Heart right ventricle (tissue), 16 donors: ENCODE measurements at regions of chr12 and their contacts with region 1.

Region 1: DNA sequence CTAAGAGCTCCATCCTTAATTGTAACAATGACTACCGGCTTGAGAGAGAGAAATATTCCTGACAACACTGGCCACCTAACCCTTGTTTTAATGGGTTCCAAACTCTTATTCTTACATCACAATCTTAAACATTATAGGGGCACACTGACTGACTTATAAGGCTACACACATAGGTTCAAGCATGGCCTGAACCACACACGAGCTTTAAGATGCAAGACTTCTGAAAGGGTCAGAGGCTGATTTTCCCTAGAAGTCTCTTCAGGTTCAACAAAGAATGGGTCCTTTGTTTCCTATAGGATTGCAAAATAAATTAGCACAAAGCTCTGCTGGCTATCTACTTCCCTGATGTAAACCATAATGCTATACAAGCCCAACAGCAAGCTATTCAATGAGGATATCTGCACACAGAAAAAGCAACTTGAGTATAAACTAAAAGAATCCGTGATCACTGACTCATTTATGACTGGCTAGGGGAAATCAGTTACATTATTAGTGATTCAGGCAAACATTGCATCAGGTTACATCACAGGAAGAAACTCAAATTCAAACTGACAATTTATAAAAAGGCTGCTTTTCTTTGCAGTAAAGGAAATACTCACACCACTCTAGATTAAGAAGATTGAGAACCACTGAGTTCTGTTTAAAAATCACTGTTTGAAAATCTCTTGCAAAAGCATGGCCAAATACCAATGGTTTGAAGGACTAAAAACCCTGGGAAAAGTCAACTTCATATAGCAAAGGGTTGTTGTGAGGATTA is 8.5 kb downstream of the BTG1 start:
- DNase-seq: no peak
- ATAC-seq: no peak
- H3K4me3 ChIP-seq: peak overlapping the region in 5 of 10 donors; percentile 83 to 95 (median 86)
- H3K27ac ChIP-seq: peak overlapping the region in 7 of 10 donors; percentile 2 to 99 (median 40)
- H3K4me1 ChIP-seq: peaks cover 8 to 88% (median 73%) of the 10 kb centered on the region in 9 donors
- H3K27me3 ChIP-seq: no peaks in the 10 kb centered on the region
- CTCF ChIP-seq: no peak

Region 2: DNA sequence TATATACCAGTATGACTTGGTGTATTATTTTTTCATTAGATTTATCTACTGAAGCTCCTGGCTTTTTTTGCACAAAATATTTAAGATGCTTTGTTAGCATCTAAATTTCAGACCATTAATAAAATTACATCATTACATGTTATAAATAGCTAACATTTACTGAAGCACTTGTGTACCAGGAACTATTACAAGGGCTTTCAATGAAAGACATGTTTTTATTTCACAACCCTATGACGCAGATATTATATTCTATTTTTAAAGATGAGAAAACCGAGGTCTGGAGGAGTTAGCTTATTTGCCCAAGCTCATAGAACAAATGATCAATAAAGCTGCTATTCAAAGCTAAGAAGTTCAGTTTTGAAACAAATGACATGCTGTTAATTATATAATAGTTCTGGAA is 534.1 kb before region 1 on chr12:
- intact Hi-C with region 1: loop called in 1 of 10 experiments (anchors 10 kb)
- DNase-seq: no peak
- ATAC-seq: peak in 6 of 8 donors; percentile 74 to 92 (median 85)
- H3K4me3 ChIP-seq: no peak overlapping the region
- H3K27ac ChIP-seq: peak overlapping the region in 4 of 10 donors; percentile 9 to 41 (median 30)
- H3K4me1 ChIP-seq: peaks cover 0 to 19% (median 8%) of the 10 kb centered on the region in 9 donors
- H3K27me3 ChIP-seq: no peaks in the 10 kb centered on the region
- CTCF ChIP-seq: no peak

Region 3: GRCh38 chr12:91985002-91985787 is 151.9 kb before region 1 on chr12:
- intact Hi-C with region 1: loop called in 4 of 10 experiments (anchors 5 to 10 kb)
- DNase-seq: no peak
- ATAC-seq: peak in 1 of 8 donors; percentile 47
- H3K4me3 ChIP-seq: no peak overlapping the region
- H3K27ac ChIP-seq: peak overlapping the region in 3 of 10 donors; percentile 9 to 64 (median 12)
- H3K4me1 ChIP-seq: peaks cover 0 to 66% (median 41%) of the 10 kb centered on the region in 9 donors
- H3K27me3 ChIP-seq: no peaks in the 10 kb centered on the region
- CTCF ChIP-seq: no peak

Region 4: DNA sequence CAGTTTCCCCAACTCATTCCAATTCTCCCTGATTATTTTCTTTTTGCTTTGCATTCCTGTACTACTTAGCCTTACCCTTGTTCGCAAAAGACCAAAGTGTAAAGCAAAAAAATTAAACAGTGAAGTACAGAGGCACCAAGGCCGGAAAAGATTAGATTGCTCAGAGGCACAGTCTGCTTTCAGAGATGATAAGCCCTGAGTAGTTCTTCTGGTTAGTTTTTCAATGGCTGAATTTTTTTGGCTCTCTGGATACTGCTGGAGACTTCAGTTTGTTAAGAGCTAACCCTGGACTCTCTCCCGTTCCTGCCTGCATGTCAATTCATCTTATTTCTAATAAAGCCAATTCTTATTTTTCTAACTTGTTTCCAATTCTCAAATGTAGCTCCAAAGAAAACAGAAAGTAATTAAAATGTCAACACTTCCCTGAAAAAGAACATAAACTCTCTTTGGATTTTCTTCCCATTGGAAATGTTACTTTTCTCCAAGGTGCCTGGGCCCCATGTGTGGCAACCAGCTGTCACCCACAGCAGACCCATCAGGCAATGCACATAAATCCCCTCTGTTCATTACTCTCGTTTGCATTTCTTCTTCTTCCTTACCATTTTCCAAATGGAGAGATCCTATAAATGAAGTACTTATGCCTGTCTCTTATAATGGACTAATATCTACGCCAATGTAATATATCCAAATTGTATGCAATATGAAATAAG is 134.3 kb before region 1 on chr12:
- intact Hi-C with region 1: loop called in 1 of 10 experiments (anchors 5 kb)
- DNase-seq: no peak
- ATAC-seq: peak in 5 of 8 donors; percentile 59 to 86 (median 77)
- H3K4me3 ChIP-seq: no peak overlapping the region
- H3K27ac ChIP-seq: peak overlapping the region in 7 of 10 donors; percentile 10 to 64 (median 50)
- H3K4me1 ChIP-seq: peaks cover 0 to 23% (median 16%) of the 10 kb centered on the region in 9 donors
- H3K27me3 ChIP-seq: no peaks in the 10 kb centered on the region
- CTCF ChIP-seq: no peak

Region 5: GRCh38 chr12:92065018-92065499 is 72.1 kb before region 1 on chr12:
- intact Hi-C with region 1: loop called in 1 of 10 experiments (anchors 10 kb)
- DNase-seq: no peak
- ATAC-seq: no peak
- H3K4me3 ChIP-seq: no peak overlapping the region
- H3K27ac ChIP-seq: no peak overlapping the region
- H3K4me1 ChIP-seq: peaks cover 0 to 50% (median 6%) of the 10 kb centered on the region in 9 donors
- H3K27me3 ChIP-seq: no peaks in the 10 kb centered on the region
- CTCF ChIP-seq: no peak

Region 6: DNA sequence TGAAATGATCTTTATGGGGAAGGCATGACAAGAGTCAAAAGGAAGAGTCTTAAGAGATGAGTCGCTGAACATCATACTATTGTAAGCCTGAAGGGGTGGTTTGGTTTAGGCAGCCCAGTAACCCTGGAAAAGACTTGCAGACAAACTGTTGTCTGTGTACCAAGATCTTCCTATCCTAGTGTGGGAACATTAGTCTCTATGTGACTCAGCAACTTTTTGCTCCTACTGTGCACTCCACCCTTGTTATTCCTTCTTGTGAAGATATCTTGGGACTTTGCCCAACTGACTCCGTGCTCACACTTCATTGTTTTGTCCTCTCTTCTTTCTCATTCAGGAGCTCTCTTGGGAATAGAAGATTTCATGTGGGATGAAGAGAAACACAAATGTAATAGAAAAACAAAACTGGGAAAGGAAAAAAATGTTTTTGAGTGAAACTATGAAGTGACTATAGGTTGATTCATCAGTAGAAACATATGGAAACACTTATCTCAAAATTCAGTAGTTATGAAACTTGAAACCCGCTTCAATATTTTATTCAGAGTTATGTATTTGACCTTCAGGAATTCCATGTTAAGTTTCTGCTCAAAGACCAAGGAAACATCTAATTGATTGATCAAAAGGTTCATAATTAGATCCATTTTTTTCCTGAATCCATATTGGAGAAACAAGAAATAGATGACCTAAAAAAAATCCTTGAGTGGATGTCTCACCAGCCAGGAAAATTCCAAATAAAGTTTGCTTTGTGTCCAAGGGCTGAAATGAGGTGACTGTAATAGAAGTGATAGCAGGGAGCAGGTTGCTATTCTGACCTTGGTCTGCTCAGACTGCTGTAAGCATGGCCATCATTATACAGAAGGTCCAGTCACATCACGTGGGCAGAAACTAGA is 58.7 kb before region 1 on chr12:
- intact Hi-C with region 1: loop called in 3 of 10 experiments (anchors 5 to 10 kb)
- DNase-seq: no peak
- ATAC-seq: peak in 7 of 8 donors; percentile 30 to 79 (median 47)
- H3K4me3 ChIP-seq: no peak overlapping the region
- H3K27ac ChIP-seq: peak overlapping the region in 2 of 10 donors; percentile 3 to 45
- H3K4me1 ChIP-seq: peaks cover 11 to 66% (median 36%) of the 10 kb centered on the region in 9 donors
- H3K27me3 ChIP-seq: no peaks in the 10 kb centered on the region
- CTCF ChIP-seq: no peak

Region 7: DNA sequence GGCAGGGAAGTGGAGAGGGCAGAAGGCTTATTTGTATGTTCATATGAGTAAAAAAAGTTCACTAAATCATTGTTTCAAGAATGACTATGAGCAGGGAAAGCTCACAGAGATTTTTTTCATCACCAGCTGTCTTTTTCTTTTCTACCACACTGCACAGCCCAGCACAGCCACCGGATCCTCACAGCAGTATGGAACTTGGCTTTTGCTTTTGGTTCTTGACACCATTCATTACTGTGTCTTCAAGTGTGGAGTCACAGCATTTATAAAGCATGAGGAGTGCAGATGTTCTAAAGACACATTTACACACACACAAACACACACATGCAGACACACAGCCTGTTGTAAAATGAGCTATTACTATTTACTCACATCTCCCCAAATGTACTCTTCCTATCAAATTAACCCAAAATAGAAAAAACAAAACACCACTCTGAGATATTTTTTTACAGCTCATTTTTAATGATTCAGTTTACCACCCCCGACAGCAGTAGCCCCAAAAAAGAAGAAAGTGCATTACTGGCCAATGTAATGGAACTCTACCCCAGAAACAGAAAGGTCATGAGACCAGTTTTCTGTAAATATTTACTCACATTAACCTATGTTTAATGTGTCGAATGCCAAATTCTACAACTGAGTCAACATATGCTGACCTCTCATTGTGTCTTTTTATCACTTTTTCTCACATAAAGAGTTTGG is 52.0 kb before region 1 on chr12:
- intact Hi-C with region 1: loop called in 2 of 10 experiments (anchors 5 to 10 kb)
- DNase-seq: no peak
- ATAC-seq: no peak
- H3K4me3 ChIP-seq: no peak overlapping the region
- H3K27ac ChIP-seq: no peak overlapping the region
- H3K4me1 ChIP-seq: peaks cover 0 to 27% (median 2%) of the 10 kb centered on the region in 9 donors
- H3K27me3 ChIP-seq: no peaks in the 10 kb centered on the region
- CTCF ChIP-seq: no peak